ENCODE measurements at regions of chr5 and their contacts with region 1.

Region 1: DNA sequence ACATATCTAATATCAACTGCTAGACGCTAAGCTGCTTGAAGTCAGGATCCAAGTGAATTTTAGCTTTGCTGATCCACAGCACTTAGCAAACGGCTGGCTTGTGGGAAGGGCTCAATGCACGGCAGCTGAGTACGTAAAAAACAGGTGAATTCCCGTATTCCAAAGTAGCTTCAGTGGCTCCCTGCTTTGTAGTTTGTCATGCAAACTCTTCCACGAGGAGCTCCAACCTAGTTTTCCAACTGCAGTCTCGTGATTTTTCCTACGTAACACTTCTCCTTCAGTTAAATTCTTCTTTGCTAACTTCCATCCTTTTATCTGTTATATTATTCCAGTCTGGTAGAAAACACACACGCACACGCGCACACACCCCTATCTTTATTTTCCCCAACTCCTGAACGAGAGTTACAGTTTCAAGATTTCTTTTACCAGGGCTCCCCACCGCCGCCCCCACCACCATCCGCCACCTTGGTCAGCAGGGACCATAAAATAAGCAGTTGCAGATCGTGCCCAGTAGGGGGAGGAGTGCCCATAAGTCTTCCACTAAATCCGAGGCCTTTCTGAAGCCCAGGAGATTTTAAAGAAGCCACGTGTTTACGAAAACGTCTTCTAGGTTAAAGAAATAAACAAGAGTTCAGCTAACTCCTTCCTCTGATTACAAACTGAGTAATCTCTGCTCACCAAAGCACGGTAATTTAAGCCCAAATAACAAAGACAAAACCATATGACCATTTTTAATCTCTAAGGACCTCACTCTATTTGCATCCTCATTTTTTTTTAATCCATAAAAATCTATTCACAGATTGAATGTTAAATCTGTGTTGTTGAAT is 34.8 kb upstream of the TRIO start:
- DNase-seq: no peak
- H3K4me3 ChIP-seq: peak overlapping the region; percentile 3 to 38 (median 28)
- H3K27ac ChIP-seq: peak overlapping the region in 2 of 4 donors; percentile 13 to 44
- H3K4me1 ChIP-seq: peaks cover 0 to 19% (median 16%) of the 10 kb centered on the region in 4 donors
- H3K27me3 ChIP-seq: no peaks in the 10 kb centered on the region
- CTCF ChIP-seq: peak; percentile 62 to 88 (median 86)
- EP300 ChIP-seq: no peak
- POLR2A ChIP-seq: no peak

Region 2: DNA sequence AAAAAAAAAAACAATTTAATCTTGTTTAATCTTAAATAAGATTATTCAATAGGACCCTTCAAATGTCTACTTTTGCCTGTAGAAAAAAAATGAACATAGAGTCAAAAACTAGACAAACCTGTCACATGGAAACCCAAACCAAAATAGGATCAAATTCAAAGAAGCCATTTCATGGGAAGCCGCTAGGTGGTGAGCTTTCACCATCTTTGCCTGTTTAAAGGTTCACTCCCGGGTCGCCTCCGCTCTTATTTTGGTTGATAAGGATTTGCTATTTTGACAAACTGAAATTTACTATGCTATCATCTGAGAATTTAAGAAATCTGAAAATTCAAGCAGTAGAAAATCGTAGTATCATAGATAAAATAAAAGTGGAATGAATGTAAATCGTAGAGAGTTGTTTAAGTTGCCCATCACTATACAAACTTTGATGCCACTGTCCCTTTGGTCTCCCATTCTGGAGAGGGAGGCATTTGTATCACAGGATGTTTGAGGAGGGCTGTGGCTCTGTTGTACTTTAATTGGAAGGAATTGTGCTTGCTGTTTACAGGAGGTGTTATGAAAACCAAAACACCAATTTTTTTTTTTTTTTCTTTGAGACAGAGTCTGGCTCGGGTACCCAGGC is 120.4 kb before region 1 on chr5:
- intact Hi-C with region 1: loop called (anchors 5 kb)
- DNase-seq: no peak
- H3K4me3 ChIP-seq: no peak overlapping the region
- H3K27ac ChIP-seq: no peak overlapping the region
- H3K4me1 ChIP-seq: peaks cover 0 to 7% (median 2%) of the 10 kb centered on the region in 4 donors
- H3K27me3 ChIP-seq: peaks cover 0 to 12% (median 0%) of the 10 kb centered on the region in 4 donors
- CTCF ChIP-seq: peak; percentile 83 to 85 (median 83)
- EP300 ChIP-seq: no peak
- POLR2A ChIP-seq: no peak

Region 3: GRCh38 chr5:14270209-14270702 is 161.9 kb after region 1 on chr5:
- intact Hi-C with region 1: loop called (anchors 1 kb)
- DNase-seq: no peak
- H3K4me3 ChIP-seq: no peak overlapping the region
- H3K27ac ChIP-seq: peak overlapping the region; percentile 70 to 76 (median 74)
- H3K4me1 ChIP-seq: peaks cover 51 to 68% (median 54%) of the 10 kb centered on the region in 4 donors
- H3K27me3 ChIP-seq: no peaks in the 10 kb centered on the region
- CTCF ChIP-seq: peak; percentile 82
- EP300 ChIP-seq: no peak
- POLR2A ChIP-seq: no peak

Region 4: GRCh38 chr5:14351845-14352712 is 243.7 kb after region 1 on chr5:
- intact Hi-C with region 1: loop called (anchors 10 kb)
- DNase-seq: no peak
- H3K4me3 ChIP-seq: no peak overlapping the region
- H3K27ac ChIP-seq: no peak overlapping the region
- H3K4me1 ChIP-seq: peaks cover 19 to 67% (median 54%) of the 10 kb centered on the region in 4 donors
- H3K27me3 ChIP-seq: no peaks in the 10 kb centered on the region
- CTCF ChIP-seq: peak in 2 of 3 experiments; percentile 85 to 91
- EP300 ChIP-seq: no peak
- POLR2A ChIP-seq: no peak